Calu3 (cell line): ENCODE measurements at regions of chr4 and their contacts with region 1.

Region 1: DNA sequence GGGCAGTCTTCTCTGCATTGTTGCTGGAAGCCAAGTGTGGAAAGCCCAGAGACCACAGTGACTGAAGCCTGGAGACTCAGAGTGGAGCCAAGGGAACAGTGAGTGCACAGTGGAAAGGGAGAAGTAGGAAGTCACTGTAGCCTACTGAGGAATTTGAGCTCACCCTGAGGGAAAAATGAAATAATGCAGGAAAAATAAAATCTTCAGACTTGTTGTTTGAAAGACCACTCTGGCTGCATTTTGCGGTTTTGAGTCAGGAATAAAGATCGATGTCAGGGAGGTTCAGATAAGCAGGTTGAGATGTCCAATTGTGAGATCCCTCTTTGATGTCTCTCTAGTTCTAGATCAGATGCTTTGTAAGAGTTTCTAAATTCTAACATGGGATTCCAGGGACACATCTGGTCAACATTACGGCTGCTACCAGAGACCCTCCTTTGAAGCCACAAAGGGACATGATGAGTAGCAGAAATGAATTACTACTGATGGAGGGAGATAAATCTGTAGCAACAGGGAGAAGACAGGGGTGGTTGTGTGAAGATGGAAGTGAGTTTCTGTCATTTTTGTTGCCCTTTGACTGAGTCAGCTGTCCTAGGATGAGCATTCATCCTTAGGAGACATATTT is 8.4 kb downstream of the ADH4 start:
- DNase-seq: no peak
- H3K4me3 Mint-ChIP-seq: no peak overlapping the region
- H3K27ac Mint-ChIP-seq: no peak overlapping the region
- H3K4me1 Mint-ChIP-seq: no peaks in the 10 kb centered on the region
- H3K27me3 Mint-ChIP-seq: no peaks in the 10 kb centered on the region
- CTCF ChIP-seq: no peak

Region 2: GRCh38 chr4:99149426-99150019 is 13.9 kb after region 1 on chr4:
- CTCF ChIA-PET with region 1: no interaction called
- intact Hi-C with region 1: no loop called
- DNase-seq: no peak
- H3K4me3 Mint-ChIP-seq: no peak overlapping the region
- H3K27ac Mint-ChIP-seq: no peak overlapping the region
- H3K4me1 Mint-ChIP-seq: no peaks in the 10 kb centered on the region
- H3K27me3 Mint-ChIP-seq: no peaks in the 10 kb centered on the region
- CTCF ChIP-seq: no peak

Region 3: GRCh38 chr4:99201690-99202089 is 66.0 kb after region 1 on chr4:
- CTCF ChIA-PET with region 1: no interaction called
- intact Hi-C with region 1: loop called (anchors 2 kb)
- DNase-seq: no peak
- H3K4me3 Mint-ChIP-seq: no peak overlapping the region
- H3K27ac Mint-ChIP-seq: no peak overlapping the region
- H3K4me1 Mint-ChIP-seq: peaks cover 21% of the 10 kb centered on the region
- H3K27me3 Mint-ChIP-seq: no peaks in the 10 kb centered on the region
- CTCF ChIP-seq: no peak